ENCODE measurements at regions of chrX and their contacts with region 1.

Region 1: GRCh38 chrX:110146521-110146920 is 143.6 kb downstream of the TMEM164 start:
- DNase-seq: peak; percentile 55
- ATAC-seq: peak; percentile 39
- H3K4me3 ChIP-seq: no peak overlapping the region
- H3K4me3 Mint-ChIP-seq: no peak overlapping the region
- H3K27ac ChIP-seq: no peak overlapping the region
- H3K27ac Mint-ChIP-seq: no peak overlapping the region
- H3K4me1 ChIP-seq: peaks cover 0 to 4% of the 10 kb centered on the region in 2 donors
- H3K4me1 Mint-ChIP-seq: peaks cover 7% of the 10 kb centered on the region
- H3K27me3 ChIP-seq: no peaks in the 10 kb centered on the region
- H3K27me3 Mint-ChIP-seq: no peaks in the 10 kb centered on the region
- CTCF ChIP-seq: peak; percentile 64

Region 2: GRCh38 chrX:109485470-109486340 is 660.8 kb before region 1 on chrX:
- CTCF ChIA-PET with region 1: no interaction called
- POLR2A ChIA-PET with region 1: no interaction called
- intact Hi-C with region 1: loop called (anchors 10 kb)
- DNase-seq: peak; percentile 82
- ATAC-seq: peak; percentile 76
- H3K4me3 ChIP-seq: no peak overlapping the region
- H3K4me3 Mint-ChIP-seq: no peak overlapping the region
- H3K27ac ChIP-seq: no peak overlapping the region
- H3K27ac Mint-ChIP-seq: no peak overlapping the region
- H3K4me1 ChIP-seq: peaks cover 10 to 11% of the 10 kb centered on the region in 2 donors
- H3K4me1 Mint-ChIP-seq: peaks cover 10% of the 10 kb centered on the region
- H3K27me3 ChIP-seq: no peaks in the 10 kb centered on the region
- H3K27me3 Mint-ChIP-seq: peaks cover 8% of the 10 kb centered on the region
- CTCF ChIP-seq: peak; percentile 94

Region 3: DNA sequence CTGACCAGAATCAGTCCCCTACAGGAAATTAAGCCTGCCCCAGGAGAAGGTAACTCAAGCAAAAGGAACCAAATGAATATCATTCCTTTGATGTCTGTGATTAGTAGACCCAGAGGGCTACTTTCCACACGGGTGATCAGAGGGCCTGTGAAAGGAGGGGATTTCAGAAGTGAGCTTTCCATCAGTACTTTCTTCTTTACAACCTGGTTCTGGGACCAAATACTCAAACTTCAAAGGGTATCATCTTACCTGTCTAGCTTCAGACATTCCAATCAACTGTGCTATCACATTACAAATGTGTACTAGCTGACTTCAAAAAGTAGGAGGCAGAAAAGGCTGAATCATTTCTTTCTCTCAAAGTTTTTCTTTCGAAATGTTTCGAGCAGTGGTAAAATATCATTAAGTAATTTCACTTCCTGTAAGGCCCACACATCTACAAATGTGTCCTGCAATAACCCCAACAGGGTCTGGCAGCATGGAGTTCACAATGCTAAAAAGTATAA is 437.3 kb before region 1 on chrX:
- CTCF ChIA-PET with region 1: interaction called, 16 read pairs
- POLR2A ChIA-PET with region 1: no interaction called
- intact Hi-C with region 1: loop called (anchors 5 kb)
- DNase-seq: peak; percentile 47
- ATAC-seq: peak; percentile 59
- H3K4me3 ChIP-seq: peak overlapping the region in 1 of 5 experiments; percentile 4
- H3K4me3 Mint-ChIP-seq: peak overlapping the region; percentile 70
- H3K27ac ChIP-seq: peak overlapping the region; percentile 54 to 61
- H3K27ac Mint-ChIP-seq: peak overlapping the region; percentile 72
- H3K4me1 ChIP-seq: peaks cover 25 to 30% of the 10 kb centered on the region in 2 donors
- H3K4me1 Mint-ChIP-seq: peaks cover 47% of the 10 kb centered on the region
- H3K27me3 ChIP-seq: no peaks in the 10 kb centered on the region
- H3K27me3 Mint-ChIP-seq: no peaks in the 10 kb centered on the region
- CTCF ChIP-seq: no peak

Region 4: DNA sequence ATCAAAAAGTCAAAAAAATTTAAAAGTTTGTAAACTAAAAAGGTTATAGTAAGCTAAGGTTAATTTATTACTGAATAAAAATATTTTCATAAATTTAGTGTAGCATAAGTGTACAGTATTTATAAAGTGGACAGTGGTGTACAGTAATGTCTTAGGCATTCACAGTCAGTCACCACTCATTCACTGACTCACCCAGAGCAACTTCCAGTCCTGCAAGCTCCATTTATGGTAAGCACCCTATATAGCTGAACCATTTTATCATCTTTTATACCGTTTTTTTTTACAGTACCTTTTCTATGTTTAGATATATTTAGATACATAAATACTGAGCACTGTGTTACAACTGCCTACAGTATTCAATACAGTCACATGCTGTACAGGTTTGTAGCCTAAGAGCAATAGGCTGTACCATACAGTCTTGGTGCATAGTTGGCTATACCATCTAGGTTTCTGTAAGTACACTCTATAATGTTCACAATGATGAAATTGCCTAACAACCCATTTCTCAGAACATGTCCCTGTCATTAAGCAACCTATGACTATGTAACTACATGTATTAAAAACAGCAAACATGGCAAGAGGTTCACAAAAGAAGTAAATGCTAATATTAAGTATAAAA is 432.1 kb before region 1 on chrX:
- CTCF ChIA-PET with region 1: interaction called, 16 read pairs
- POLR2A ChIA-PET with region 1: no interaction called
- intact Hi-C with region 1: loop called (anchors 5 kb)
- DNase-seq: no peak
- ATAC-seq: no peak
- H3K4me3 ChIP-seq: no peak overlapping the region
- H3K4me3 Mint-ChIP-seq: no peak overlapping the region
- H3K27ac ChIP-seq: no peak overlapping the region
- H3K27ac Mint-ChIP-seq: no peak overlapping the region
- H3K4me1 ChIP-seq: peaks cover 3 to 6% of the 10 kb centered on the region in 2 donors
- H3K4me1 Mint-ChIP-seq: peaks cover 30% of the 10 kb centered on the region
- H3K27me3 ChIP-seq: no peaks in the 10 kb centered on the region
- H3K27me3 Mint-ChIP-seq: no peaks in the 10 kb centered on the region
- CTCF ChIP-seq: no peak

Region 5: DNA sequence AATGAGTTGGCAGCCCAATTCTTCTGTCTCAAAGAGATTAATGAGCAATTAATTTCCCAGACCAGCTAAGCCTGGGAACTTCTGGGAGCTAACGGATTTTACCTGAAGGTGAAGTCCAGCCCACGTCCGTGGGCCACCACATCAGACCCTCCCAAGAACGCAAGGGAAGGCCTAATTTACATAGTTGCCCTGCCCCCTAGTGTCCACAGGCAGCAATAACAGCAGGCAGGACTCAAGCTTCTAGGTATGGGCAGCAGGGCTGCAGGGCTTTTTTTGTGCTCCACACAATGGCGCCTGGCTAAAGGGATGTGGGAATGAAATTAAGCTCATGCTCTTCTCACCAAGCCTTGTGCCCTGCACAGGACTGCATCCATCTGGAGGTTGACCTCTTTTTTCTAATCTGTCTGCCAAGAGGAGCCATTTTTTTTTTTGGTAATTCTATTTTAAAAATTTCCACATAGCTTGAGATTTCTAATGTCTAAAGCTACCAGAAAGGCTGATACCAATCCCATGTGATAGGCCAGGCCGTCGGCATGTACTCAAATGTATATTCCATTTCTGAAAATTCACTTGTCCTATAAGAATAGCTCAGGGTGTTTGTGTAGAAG is 255.5 kb before region 1 on chrX:
- CTCF ChIA-PET with region 1: interaction called, 11 read pairs
- POLR2A ChIA-PET with region 1: no interaction called
- intact Hi-C with region 1: loop called (anchors 10 kb)
- DNase-seq: peak; percentile 58
- ATAC-seq: peak; percentile 49
- H3K4me3 ChIP-seq: no peak overlapping the region
- H3K4me3 Mint-ChIP-seq: no peak overlapping the region
- H3K27ac ChIP-seq: no peak overlapping the region
- H3K27ac Mint-ChIP-seq: peak overlapping the region; percentile 41
- H3K4me1 ChIP-seq: peaks cover 25 to 34% of the 10 kb centered on the region in 2 donors
- H3K4me1 Mint-ChIP-seq: peaks cover 32% of the 10 kb centered on the region
- H3K27me3 ChIP-seq: no peaks in the 10 kb centered on the region
- H3K27me3 Mint-ChIP-seq: no peaks in the 10 kb centered on the region
- CTCF ChIP-seq: peak; percentile 77

Region 6: DNA sequence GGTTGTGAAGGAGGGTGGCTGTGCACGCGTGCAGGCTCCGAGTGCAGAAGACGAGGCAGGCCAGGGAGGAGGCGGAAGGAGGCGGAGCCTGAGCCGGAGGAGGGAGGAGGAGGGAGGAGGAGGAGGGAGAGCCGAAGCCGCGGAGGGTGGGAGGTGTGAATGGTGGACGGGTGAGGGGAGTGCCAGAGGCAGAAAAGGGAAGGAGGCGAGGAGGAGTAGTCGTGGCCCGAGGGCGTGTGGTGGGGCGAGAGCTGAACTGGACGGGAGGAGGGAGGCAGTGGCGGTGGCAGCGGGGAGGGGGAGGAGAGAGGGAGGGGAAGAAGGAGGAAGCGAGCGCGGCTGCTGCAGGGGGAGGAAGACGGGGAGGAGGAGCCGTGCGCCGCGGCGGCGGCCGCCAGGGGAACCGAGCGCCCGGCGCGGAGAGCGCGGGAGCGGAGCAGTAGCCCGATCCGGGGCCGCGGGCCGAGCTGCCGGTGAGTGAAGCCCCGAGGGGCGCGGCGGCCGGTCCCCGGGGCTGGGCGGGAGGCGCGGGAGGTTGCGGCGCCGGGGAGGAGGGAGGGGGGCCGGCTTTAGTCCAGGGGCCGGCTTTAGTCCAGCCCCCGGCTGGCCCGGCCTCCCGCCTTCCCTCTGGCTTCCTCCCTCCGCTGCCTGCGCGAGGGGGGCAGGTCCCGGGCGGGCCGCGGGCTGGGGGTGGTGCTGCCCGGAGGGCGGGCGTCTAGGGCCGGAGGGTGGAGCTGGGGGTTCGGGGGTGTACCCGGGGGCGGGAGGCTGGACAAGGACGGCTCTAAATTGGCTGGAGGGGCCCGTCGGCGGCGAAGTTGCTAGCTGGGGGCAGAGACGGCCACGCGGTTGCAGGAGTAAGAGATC is 144.0 kb before region 1 on chrX and contains the start of gene TMEM164:
- CTCF ChIA-PET with region 1: no interaction called
- POLR2A ChIA-PET with region 1: no interaction called
- intact Hi-C with region 1: loop called (anchors 10 kb)
- DNase-seq: peak; percentile 88
- ATAC-seq: peak; percentile 76
- H3K4me3 ChIP-seq: peak within 1 kb of the TSS in 4 of 5 experiments; percentile 57 to 71 (median 65)
- H3K4me3 Mint-ChIP-seq: peak within 1 kb of the TSS; percentile 93
- H3K27ac ChIP-seq: peak within 1 kb of the TSS; percentile 53 to 61
- H3K27ac Mint-ChIP-seq: peak within 1 kb of the TSS; percentile 96
- H3K4me1 ChIP-seq: peaks cover 7 to 15% of the 10 kb centered on the region in 2 donors
- H3K4me1 Mint-ChIP-seq: peaks cover 25% of the 10 kb centered on the region
- H3K27me3 ChIP-seq: no peaks in the 10 kb centered on the region
- H3K27me3 Mint-ChIP-seq: no peaks in the 10 kb centered on the region
- CTCF ChIP-seq: no peak
- total RNA-seq, gene TMEM164: 24.5 and 26.6 TPM in 2 replicates

Region 7: DNA sequence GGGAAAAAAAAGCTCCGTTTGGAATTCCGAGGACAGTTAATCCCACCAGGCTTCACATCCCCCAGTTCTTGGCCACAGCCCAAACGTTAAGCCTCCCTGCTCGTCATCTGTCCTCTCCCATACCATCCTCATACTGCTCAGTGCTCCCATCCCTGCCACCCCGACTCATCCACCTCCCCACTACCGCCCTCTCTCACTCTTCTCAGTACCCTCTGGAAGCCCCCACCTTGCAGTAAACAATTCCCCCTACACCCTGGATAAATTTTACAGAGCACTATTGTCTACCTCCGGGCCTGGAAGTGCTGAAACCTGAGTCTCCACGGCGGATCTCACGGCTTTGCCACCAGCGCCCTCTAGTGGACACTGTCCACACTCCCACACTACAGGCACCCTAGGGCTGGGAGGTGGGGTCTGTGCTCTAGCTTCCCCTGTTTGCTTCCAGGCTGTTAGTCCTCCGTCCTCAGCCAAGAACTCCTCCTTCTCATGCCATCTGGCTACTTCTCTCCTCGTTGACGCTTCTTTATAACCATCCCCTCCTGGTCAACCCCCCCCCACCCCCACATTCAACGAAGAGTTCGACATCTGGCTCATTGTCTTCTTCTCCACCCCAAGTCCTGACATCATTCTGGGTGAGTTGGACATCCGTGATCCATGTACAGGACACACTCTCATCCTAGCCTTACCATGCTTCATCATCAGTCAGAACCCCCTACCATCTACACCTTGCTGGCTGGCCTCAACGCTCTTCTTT is 266.6 kb after region 1 on chrX:
- CTCF ChIA-PET with region 1: interaction called, 721 read pairs
- POLR2A ChIA-PET with region 1: no interaction called
- intact Hi-C with region 1: no loop called
- DNase-seq: peak; percentile 72
- ATAC-seq: peak; percentile 82
- H3K4me3 ChIP-seq: no peak overlapping the region
- H3K4me3 Mint-ChIP-seq: no peak overlapping the region
- H3K27ac ChIP-seq: no peak overlapping the region
- H3K27ac Mint-ChIP-seq: no peak overlapping the region
- H3K4me1 ChIP-seq: no peaks in the 10 kb centered on the region
- H3K4me1 Mint-ChIP-seq: peaks cover 4% of the 10 kb centered on the region
- H3K27me3 ChIP-seq: no peaks in the 10 kb centered on the region
- H3K27me3 Mint-ChIP-seq: peaks cover 2% of the 10 kb centered on the region
- CTCF ChIP-seq: peak; percentile 73

Measured in B cell (primary cell).